Common myeloid progenitor, CD34-positive (primary cell): ENCODE measurements at regions of chr6 and their contacts with region 1.

Region 1: DNA sequence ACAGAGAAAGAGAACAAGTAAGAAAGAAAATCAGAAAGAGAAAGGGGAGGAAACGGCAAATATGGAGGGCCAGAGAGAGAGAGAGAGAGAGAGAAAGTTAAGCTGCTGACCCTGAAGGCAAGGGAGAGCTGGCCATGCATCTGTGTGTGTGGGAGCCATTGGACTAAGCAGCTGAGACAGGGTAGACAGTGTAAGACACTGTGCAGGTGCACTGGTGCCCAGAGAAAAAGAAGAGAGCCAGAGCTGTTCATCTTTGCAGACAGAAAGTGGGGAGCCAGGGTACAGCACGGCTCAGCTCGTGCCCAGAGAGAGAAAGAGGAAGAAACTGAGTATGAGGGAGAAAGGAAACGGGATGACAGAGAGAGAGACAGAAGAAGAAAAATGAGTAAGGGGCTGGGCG is 24.2 kb upstream of the ZNF318 start:
- DNase-seq: peak in 2 of 3 donors; percentile 45 to 54
- H3K4me3 ChIP-seq: peak overlapping the region in 3 of 7 experiments; percentile 8 to 53 (median 39)
- H3K27ac ChIP-seq: no peak overlapping the region
- H3K4me1 ChIP-seq: peaks cover 0 to 31% (median 22%) of the 10 kb centered on the region in 4 experiments
- H3K27me3 ChIP-seq: peaks cover 0 to 68% (median 31%) of the 10 kb centered on the region in 5 experiments

Region 2: GRCh38 chr6:42629845-42630244 is 763.8 kb before region 1 on chr6:
- CTCF ChIA-PET with region 1: no interaction called
- POLR2A ChIA-PET with region 1: no interaction called
- DNase-seq: peak in 2 of 3 donors; percentile 21 to 23
- H3K4me3 ChIP-seq: no peak overlapping the region
- H3K27ac ChIP-seq: peak overlapping the region in 1 of 2 experiments; percentile 9
- H3K4me1 ChIP-seq: peaks cover 0 to 3% (median under 1%) of the 10 kb centered on the region in 4 experiments
- H3K27me3 ChIP-seq: no peaks in the 10 kb centered on the region

Region 3: GRCh38 chr6:43383021-43383667 is 10.5 kb before region 1 on chr6:
- CTCF ChIA-PET with region 1: interaction called, 14 read pairs
- POLR2A ChIA-PET with region 1: no interaction called
- DNase-seq: no peak
- H3K4me3 ChIP-seq: no peak overlapping the region
- H3K27ac ChIP-seq: no peak overlapping the region
- H3K4me1 ChIP-seq: peaks cover 9 to 20% (median 15%) of the 10 kb centered on the region in 4 experiments
- H3K27me3 ChIP-seq: peaks cover 5 to 78% (median 35%) of the 10 kb centered on the region in 5 experiments

Region 4: GRCh38 chr6:43532201-43532600 is 138.6 kb after region 1 on chr6:
- CTCF ChIA-PET with region 1: no interaction called
- POLR2A ChIA-PET with region 1: no interaction called
- DNase-seq: no peak
- H3K4me3 ChIP-seq: no peak overlapping the region
- H3K27ac ChIP-seq: no peak overlapping the region
- H3K4me1 ChIP-seq: no peaks in the 10 kb centered on the region
- H3K27me3 ChIP-seq: no peaks in the 10 kb centered on the region

Region 5: DNA sequence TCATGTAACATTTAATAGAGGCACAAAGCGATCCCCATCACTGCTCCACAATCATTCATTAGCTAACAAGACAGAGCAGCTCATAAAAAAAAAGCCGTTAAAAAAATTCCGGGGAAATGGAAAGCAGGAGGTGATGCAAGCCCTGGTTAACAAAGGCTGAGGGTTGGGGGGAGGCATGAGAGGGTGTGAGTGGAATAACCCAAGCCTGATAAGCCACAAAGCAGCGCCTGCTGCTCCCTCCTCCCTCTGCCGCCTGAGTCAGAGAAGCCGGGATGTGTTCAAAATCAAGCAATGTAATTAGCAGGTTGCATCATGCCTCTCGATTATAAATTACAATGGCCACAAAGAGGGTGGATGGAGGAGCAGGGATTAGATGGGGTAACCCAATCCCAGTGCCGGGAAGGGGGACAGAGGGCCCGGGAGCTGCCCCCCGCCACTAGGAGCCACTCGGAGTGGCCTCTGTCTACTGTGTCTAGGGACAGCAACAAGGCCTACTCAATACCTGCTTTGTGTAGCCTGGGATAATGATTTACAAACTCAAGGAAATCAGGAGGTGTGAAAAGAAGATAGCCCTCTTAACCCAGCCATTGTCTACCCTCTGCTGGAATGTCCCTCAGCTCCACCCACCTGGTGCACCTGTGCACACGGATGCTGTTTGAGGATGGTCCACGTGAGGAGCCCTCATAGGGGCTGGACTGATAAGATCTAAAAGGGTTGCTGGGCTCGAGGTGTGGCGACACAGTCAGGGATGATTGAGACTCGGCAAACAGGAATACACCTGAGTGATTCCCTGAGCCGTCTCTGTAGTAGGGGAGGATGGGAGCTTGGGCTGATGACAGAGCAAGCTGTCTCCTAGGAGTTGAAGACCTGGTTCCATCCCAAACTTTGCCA is 533.3 kb after region 1 on chr6:
- CTCF ChIA-PET with region 1: no interaction called
- POLR2A ChIA-PET with region 1: no interaction called
- DNase-seq: peak in 1 of 3 donors; percentile 18
- H3K4me3 ChIP-seq: no peak overlapping the region
- H3K27ac ChIP-seq: peak overlapping the region in 1 of 2 experiments; percentile 69
- H3K4me1 ChIP-seq: peaks cover 0 to 37% (median 29%) of the 10 kb centered on the region in 4 experiments
- H3K27me3 ChIP-seq: no peaks in the 10 kb centered on the region